ENCODE measurements at regions of chr4 and their contacts with region 1.

Region 1: GRCh38 chr4:109702950-109703663 is at the start of gene CASP6:
- DNase-seq: peak; percentile 55 to 85 (median 72)
- ATAC-seq: peak; percentile 86 to 91 (median 88)
- H3K4me3 ChIP-seq: peak within 1 kb of the TSS; percentile 82 to 85
- H3K4me3 Mint-ChIP-seq: peak within 1 kb of the TSS; percentile 87 to 98 (median 91)
- H3K27ac ChIP-seq: peak within 1 kb of the TSS; percentile 66
- H3K27ac Mint-ChIP-seq: peak within 1 kb of the TSS; percentile 91 to 92
- H3K4me1 ChIP-seq: peaks cover 6 to 27% of the 10 kb centered on the region in 2 experiments
- H3K4me1 Mint-ChIP-seq: peaks cover 45 to 50% (median 45%) of the 10 kb centered on the region in 3 donors
- H3K27me3 ChIP-seq: no peaks in the 10 kb centered on the region
- H3K27me3 Mint-ChIP-seq: no peaks in the 10 kb centered on the region
- total RNA-seq, gene CASP6: 16.8 to 23.2 (median 18.3) TPM

Region 2: DNA sequence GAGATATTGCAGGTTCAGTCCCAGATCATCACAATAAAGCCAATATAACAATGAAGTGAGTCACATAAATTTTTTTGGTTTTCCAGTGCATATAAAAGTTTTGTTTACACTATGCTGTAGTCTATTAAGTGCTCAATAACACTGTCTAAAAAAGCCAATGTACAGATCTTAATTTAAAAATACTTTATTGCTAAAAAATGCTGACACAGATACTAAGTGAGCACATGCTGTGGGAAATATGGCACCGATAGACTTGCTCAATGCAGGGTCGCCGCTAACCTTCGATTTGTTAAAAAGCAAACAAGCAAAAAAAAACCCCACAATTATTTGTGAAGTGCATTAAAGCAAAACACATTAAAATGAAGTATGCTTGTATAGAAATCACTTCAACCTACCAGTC is 16.5 kb after region 1 on chr4:
- CTCF ChIA-PET with region 1: no interaction called
- POLR2A ChIA-PET with region 1: no interaction called
- DNase-seq: no peak
- ATAC-seq: no peak
- H3K4me3 ChIP-seq: no peak overlapping the region
- H3K4me3 Mint-ChIP-seq: no peak overlapping the region
- H3K27ac ChIP-seq: no peak overlapping the region
- H3K27ac Mint-ChIP-seq: no peak overlapping the region
- H3K4me1 ChIP-seq: no peaks in the 10 kb centered on the region
- H3K4me1 Mint-ChIP-seq: peaks cover 7 to 23% (median 10%) of the 10 kb centered on the region in 3 donors
- H3K27me3 ChIP-seq: no peaks in the 10 kb centered on the region
- H3K27me3 Mint-ChIP-seq: no peaks in the 10 kb centered on the region

Region 3: GRCh38 chr4:109729718-109730618 is 26.9 kb after region 1 on chr4 and contains the start of gene PLA2G12A:
- CTCF ChIA-PET with region 1: interaction called in 1 of 2 experiments, 10 read pairs
- POLR2A ChIA-PET with region 1: interaction called, 3 to 15 read pairs
- DNase-seq: peak; percentile 59 to 90 (median 76)
- ATAC-seq: peak; percentile 86 to 95 (median 90)
- H3K4me3 ChIP-seq: peak within 1 kb of the TSS; percentile 82 to 95
- H3K4me3 Mint-ChIP-seq: peak within 1 kb of the TSS; percentile 86 to 91 (median 87)
- H3K27ac ChIP-seq: peak within 1 kb of the TSS; percentile 67
- H3K27ac Mint-ChIP-seq: peak within 1 kb of the TSS; percentile 73 to 85
- H3K4me1 ChIP-seq: peaks cover 11 to 12% of the 10 kb centered on the region in 2 experiments
- H3K4me1 Mint-ChIP-seq: peaks cover 22 to 35% (median 25%) of the 10 kb centered on the region in 3 donors
- H3K27me3 ChIP-seq: no peaks in the 10 kb centered on the region
- H3K27me3 Mint-ChIP-seq: no peaks in the 10 kb centered on the region
- total RNA-seq, gene PLA2G12A: 11.4 to 20.6 (median 18.1) TPM